ENCODE measurements at regions of chr10 and their contacts with region 1.

Region 1: DNA sequence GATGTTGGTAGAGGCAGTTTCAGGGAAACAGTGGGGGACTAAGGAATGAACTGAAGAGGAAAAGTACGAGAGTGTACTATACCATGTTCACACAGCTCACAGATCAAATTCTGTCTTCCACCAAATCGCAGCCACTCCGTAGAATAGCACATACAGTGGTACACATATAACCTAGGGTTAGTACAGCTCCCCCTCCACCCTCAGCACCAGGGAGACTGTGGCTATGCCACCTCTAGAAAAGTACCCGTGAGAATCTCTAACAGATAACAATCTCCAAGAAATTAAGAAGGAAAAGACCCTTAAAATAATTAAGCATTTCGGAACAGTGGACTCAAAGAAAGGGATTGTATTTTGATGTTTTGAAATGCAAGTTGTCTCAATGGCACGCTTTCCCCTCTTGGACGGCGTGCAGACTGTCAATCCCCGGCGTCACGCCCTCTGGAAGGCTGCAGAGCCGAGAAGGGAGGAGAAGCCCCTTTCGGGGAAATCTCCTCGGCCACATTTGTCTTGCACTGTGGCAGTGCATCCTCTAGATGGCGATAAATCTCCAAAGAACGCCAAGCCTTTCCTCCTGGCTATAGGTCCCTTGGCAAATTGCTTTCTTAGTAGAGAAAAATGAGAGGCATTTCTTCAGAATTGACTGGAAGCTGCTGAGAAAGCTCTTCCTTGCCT is 345.0 kb downstream of the REEP3 start:
- DNase-seq: peak; percentile 5
- ATAC-seq: peak; percentile 95
- H3K4me3 ChIP-seq: no peak overlapping the region
- H3K27ac ChIP-seq: no peak overlapping the region
- H3K4me1 ChIP-seq: no peaks in the 10 kb centered on the region
- H3K27me3 ChIP-seq: no peaks in the 10 kb centered on the region
- CTCF ChIP-seq: peak; percentile 80 to 88 (median 82)
- EP300 ChIP-seq: no peak
- POLR2A ChIP-seq: no peak
- RAD21 ChIP-seq: peak; percentile 61

Region 2: DNA sequence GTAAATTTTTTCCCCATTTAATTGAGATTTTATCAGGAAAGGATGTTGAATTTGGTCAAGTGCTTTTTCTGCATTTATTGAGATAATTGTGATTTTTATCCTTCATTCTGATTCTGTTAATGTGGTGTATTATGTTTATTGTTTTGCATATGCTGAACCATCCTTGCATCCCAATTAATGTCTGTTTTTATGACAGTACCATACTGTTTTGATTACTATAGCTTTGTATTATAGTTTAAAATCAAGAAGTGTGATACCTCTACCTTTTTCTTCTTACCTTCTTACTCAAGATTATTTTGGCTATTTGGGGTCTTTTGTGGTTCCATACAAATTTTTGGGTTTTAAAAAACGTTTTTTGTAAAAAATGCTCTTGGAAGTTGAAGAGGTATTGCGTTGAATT is 12.2 kb after region 1 on chr10:
- CTCF ChIA-PET with region 1: interaction called, 13 read pairs
- POLR2A ChIA-PET with region 1: no interaction called
- RAD21 ChIA-PET with region 1: no interaction called
- SMC1A ChIA-PET with region 1: interaction called, 5 read pairs
- in situ Hi-C with region 1: no loop called
- intact Hi-C with region 1: no loop called
- DNase-seq: no peak
- ATAC-seq: no peak
- H3K4me3 ChIP-seq: no peak overlapping the region
- H3K27ac ChIP-seq: no peak overlapping the region
- H3K4me1 ChIP-seq: no peaks in the 10 kb centered on the region
- H3K27me3 ChIP-seq: no peaks in the 10 kb centered on the region
- CTCF ChIP-seq: no peak
- EP300 ChIP-seq: no peak
- POLR2A ChIP-seq: no peak
- RAD21 ChIP-seq: no peak

Region 3: GRCh38 chr10:63887023-63887589 is 20.9 kb after region 1 on chr10:
- CTCF ChIA-PET with region 1: interaction called, 14 read pairs
- POLR2A ChIA-PET with region 1: no interaction called
- RAD21 ChIA-PET with region 1: no interaction called
- SMC1A ChIA-PET with region 1: interaction called, 4 read pairs
- in situ Hi-C with region 1: no loop called
- intact Hi-C with region 1: no loop called
- DNase-seq: no peak
- ATAC-seq: no peak
- H3K4me3 ChIP-seq: no peak overlapping the region
- H3K27ac ChIP-seq: no peak overlapping the region
- H3K4me1 ChIP-seq: no peaks in the 10 kb centered on the region
- H3K27me3 ChIP-seq: no peaks in the 10 kb centered on the region
- CTCF ChIP-seq: no peak
- EP300 ChIP-seq: no peak
- POLR2A ChIP-seq: no peak
- RAD21 ChIP-seq: no peak

Region 4: GRCh38 chr10:64191286-64191685 is 325.1 kb after region 1 on chr10:
- CTCF ChIA-PET with region 1: no interaction called
- POLR2A ChIA-PET with region 1: no interaction called
- RAD21 ChIA-PET with region 1: no interaction called
- SMC1A ChIA-PET with region 1: no interaction called
- in situ Hi-C with region 1: no loop called
- intact Hi-C with region 1: no loop called
- DNase-seq: no peak
- ATAC-seq: no peak
- H3K4me3 ChIP-seq: no peak overlapping the region
- H3K27ac ChIP-seq: no peak overlapping the region
- H3K4me1 ChIP-seq: no peaks in the 10 kb centered on the region
- H3K27me3 ChIP-seq: no peaks in the 10 kb centered on the region
- CTCF ChIP-seq: no peak
- EP300 ChIP-seq: no peak
- POLR2A ChIP-seq: no peak
- RAD21 ChIP-seq: no peak